ENCODE measurements at regions of chr10 and their contacts with region 1.

Region 1: DNA sequence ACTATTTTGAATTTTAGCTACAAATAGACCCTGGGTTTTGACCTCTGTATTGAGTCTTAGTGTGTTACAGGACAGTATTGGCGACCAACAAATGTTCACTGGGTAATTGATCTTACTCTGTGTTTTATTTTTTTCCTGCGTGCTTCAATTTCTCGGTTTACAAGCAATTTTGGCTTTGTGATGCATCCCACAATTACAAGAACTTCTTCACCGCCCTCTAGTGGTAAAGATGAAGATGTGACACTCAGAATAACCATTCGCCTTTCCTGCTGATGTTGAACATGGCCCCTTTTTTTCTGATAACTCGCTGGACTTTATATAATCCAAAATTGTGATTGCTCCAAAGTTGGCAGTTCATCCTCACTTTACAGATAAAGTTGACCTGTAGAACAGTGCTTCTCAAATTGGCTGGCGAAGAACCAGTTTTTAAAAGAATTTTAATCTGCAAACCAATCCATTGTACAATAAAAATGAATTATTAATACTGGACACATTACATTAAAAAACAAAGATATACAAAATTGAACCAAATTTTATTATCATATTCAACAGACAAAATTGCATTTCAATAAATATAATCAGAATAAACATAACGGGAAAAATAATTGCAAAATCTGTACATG is 20.2 kb upstream of the SMC3 start:
- DNase-seq: peak; percentile 69
- ATAC-seq: peak; percentile 70 to 87; a peak in 5 of 6 replicates
- H3K4me3 ChIP-seq: no peak overlapping the region
- H3K27ac ChIP-seq: peak overlapping the region; percentile 64 to 74
- H3K4me1 ChIP-seq: peaks cover 10% of the 10 kb centered on the region
- CTCF ChIP-seq: peak; percentile 89
- EP300 ChIP-seq: no peak
- POLR2A ChIP-seq: no peak
- RAD21 ChIP-seq: peak; percentile 92 to 93

Region 2: DNA sequence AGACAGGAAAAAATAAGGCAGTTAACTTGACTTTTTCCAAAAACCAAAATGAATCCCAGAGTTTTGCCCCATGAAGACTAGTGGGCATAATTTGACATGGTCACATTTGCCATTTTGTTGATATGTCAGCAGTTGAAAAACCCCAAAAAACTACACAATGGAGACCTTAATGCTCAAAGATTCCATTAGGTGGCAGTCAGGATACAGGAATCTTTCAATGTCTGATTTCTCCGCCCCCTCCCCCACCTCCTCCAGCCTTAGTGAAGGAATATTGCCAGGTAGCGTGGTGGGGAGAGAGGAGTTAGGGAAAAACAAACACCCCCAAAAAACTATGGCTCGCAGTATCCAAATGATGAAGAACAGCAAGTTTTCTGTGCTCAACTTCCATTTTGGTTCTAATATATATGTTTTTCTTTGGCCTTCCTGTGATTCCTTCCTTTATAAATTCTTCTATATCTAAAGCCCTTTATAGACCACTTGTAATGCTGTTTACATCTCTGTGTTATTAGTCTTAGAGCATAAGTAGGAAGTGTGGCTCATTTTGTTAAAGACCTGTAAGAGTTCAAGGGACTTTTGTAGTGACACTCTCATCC is 235.8 kb before region 1 on chr10:
- CTCF ChIA-PET with region 1: interaction called, 65 read pairs
- POLR2A ChIA-PET with region 1: interaction called, 3 read pairs
- DNase-seq: peak; percentile 54 to 79
- ATAC-seq: peak; percentile 84 to 86
- H3K4me3 ChIP-seq: no peak overlapping the region
- H3K27ac ChIP-seq: peak overlapping the region; percentile 76 to 84
- H3K4me1 ChIP-seq: peaks cover 57% of the 10 kb centered on the region
- CTCF ChIP-seq: peak; percentile 90
- EP300 ChIP-seq: peak in 1 of 2 experiments; percentile 39; a peak in 1 of 5 replicates
- POLR2A ChIP-seq: no peak
- RAD21 ChIP-seq: peak; percentile 97 to 100

Region 3: DNA sequence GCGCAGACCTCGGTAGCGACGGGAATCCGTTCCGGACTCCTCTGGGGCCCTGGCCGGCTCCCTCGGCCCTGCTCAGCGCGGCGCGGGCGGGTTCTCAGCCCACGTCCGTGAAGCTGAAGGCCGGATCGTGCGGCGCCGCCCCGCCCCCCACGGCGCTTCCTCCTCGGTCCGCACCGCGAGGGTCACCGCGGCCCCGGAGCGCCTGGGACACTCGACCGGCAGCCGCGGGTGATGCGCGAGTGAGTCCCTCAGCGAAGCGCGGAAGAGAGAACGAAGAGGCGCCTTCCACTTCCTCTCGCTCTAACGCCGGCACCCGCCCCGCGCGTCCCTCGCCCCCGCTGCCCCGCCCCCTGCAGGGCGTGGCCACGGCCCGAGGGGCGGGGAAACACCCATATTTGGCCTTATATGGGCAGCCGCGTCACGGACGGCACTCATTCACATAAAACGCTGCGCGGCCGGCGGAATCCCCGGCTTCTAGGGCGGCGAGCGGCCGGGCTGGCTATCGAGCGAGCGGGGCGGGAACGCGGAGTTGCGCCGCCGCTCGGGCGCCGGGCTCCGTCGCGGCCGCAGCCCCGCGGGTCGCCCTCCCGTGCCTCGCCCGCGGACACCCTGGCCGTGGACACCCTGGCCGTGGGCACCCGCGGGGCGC is 49.7 kb before region 1 on chr10 and contains the start of gene DUSP5:
- CTCF ChIA-PET with region 1: interaction called, 17 read pairs
- POLR2A ChIA-PET with region 1: no interaction called
- DNase-seq: peak; percentile 85 to 93
- ATAC-seq: peak; percentile 48 to 50
- H3K4me3 ChIP-seq: peak within 1 kb of the TSS; percentile 86
- H3K27ac ChIP-seq: peak within 1 kb of the TSS; percentile 96
- H3K4me1 ChIP-seq: peaks cover 49% of the 10 kb centered on the region
- CTCF ChIP-seq: peak; percentile 19; the same call in 1 of the 3 replicates
- EP300 ChIP-seq: no peak
- POLR2A ChIP-seq: peak; percentile 98
- RAD21 ChIP-seq: peak; percentile 9 to 22; a peak in 3 of 5 replicates
- polyA plus RNA-seq, gene DUSP5: 152 and 171 TPM in 2 replicates

Region 4: DNA sequence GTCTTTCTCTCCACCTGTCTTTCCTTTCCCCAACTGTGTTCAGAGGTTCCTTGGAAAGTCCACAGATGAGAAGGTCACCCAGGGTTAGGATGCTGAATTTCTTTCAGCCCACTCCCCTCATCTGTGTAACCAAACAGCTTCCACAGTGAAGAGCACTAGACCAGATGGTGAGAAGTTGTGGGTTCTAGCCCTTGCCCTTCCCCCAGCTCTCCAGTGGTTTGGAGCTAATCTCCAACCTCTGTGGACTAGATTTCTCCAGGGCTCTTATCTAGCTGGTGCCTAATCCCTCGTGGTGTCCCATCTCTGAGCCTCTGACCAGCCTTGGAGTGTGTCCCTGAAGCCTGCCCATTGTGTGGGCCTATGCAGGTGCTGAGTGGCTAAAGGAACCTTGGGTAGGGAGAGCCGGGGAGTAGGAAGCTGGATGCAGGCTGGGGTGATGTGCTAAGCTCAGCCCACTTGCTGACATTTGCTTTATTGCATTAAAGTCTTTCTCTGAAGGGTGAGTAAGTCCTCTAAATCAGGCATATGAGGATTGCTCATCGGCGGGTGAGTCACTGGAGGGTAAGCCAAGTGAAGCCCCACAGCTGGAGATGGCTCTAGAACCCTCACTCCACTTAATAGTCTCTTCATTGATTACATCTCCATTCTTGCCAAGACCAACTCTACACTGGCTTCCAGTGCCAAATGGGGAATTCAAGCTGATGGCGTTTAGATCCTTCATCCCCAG is 34.6 kb before region 1 on chr10:
- CTCF ChIA-PET with region 1: interaction called, 12 read pairs
- POLR2A ChIA-PET with region 1: no interaction called
- DNase-seq: peak; percentile 59 to 77
- ATAC-seq: peak; percentile 19 to 57
- H3K4me3 ChIP-seq: no peak overlapping the region
- H3K27ac ChIP-seq: peak overlapping the region; percentile 43 to 76; a peak in 5 of 6 replicates
- H3K4me1 ChIP-seq: peaks cover 57% of the 10 kb centered on the region
- CTCF ChIP-seq: no peak
- EP300 ChIP-seq: no peak
- POLR2A ChIP-seq: no peak
- RAD21 ChIP-seq: no peak

Region 5: DNA sequence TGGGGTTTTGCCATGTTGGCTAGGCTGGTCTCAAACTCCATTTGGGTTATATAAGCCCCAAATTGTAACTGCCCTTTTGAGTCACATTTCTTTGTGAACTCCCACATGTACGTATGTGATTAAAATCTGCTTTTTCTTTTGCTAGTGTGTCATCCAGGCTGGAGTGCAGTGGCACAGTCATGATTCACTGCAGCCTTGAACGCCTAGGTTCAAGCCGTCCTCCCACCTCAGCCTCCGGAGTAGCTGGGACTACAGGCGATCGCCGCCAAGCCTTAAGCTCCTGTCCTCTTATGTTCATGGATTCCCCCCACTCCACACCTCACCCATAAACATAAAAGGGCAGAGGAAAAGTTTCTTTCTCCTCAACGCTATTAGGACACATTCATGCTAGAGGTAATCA is 15.9 kb after region 1 on chr10:
- CTCF ChIA-PET with region 1: interaction called, 25 read pairs
- POLR2A ChIA-PET with region 1: no interaction called
- DNase-seq: no peak
- ATAC-seq: no peak
- H3K4me3 ChIP-seq: no peak overlapping the region
- H3K27ac ChIP-seq: no peak overlapping the region
- H3K4me1 ChIP-seq: peaks cover 6% of the 10 kb centered on the region
- CTCF ChIP-seq: no peak
- EP300 ChIP-seq: no peak
- POLR2A ChIP-seq: no peak
- RAD21 ChIP-seq: no peak